ENCODE measurements at regions of chr20 and their contacts with region 1.

Region 1: GRCh38 chr20:2206957-2207769 is 88.6 kb upstream of the TGM3 start:
- DNase-seq: peak; percentile 75
- H3K4me3 Mint-ChIP-seq: peak overlapping the region; percentile 71
- H3K27ac Mint-ChIP-seq: no peak overlapping the region
- H3K4me1 Mint-ChIP-seq: peaks cover 2% of the 10 kb centered on the region
- H3K27me3 Mint-ChIP-seq: peaks cover 6% of the 10 kb centered on the region

Region 2: GRCh38 chr20:1423625-1424106 is 783.5 kb before region 1 on chr20:
- CTCF ChIA-PET with region 1: no interaction called
- intact Hi-C with region 1: no loop called
- DNase-seq: peak; percentile 33
- H3K4me3 Mint-ChIP-seq: no peak overlapping the region
- H3K27ac Mint-ChIP-seq: no peak overlapping the region
- H3K4me1 Mint-ChIP-seq: peaks cover 17% of the 10 kb centered on the region
- H3K27me3 Mint-ChIP-seq: no peaks in the 10 kb centered on the region

Region 3: GRCh38 chr20:2195614-2196013 is 11.5 kb before region 1 on chr20:
- CTCF ChIA-PET with region 1: interaction called, 16 read pairs
- intact Hi-C with region 1: no loop called
- DNase-seq: no peak
- H3K4me3 Mint-ChIP-seq: no peak overlapping the region
- H3K27ac Mint-ChIP-seq: no peak overlapping the region
- H3K4me1 Mint-ChIP-seq: no peaks in the 10 kb centered on the region
- H3K27me3 Mint-ChIP-seq: peaks cover 8% of the 10 kb centered on the region

Region 4: DNA sequence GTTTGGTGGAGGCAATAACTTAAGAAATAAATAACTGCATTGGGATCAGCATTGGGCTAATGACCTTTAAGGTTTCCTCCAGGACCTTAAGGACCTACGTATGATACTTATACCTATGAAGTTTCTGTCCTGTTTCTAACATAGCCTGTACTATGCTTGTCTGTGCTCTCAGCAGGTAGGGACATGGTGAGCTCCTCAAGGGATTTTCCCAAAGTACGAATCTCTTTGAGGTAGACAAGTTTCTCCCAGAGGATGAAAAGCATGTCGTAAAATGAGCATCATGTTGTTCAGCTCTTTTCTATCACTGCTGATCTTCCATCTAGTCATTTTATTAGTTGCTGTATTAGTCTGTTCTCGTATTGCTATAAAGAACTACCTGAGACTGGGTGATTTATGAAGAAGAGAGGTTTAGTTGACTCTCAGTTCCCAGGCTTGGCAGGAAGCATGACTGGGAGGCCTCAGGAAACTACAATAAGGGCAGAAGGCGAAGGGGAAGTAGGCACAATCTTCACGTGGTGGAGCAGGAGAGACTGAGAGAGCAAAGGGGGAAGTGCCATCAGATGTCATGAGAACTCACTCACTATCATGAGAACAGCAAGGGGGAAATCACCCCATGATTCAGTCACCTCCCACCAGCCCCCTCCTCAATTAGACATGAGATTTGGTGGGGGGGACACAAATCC is 10.8 kb after region 1 on chr20:
- CTCF ChIA-PET with region 1: interaction called, 14 read pairs
- intact Hi-C with region 1: loop called (anchors 1 kb)
- DNase-seq: peak; percentile 73
- H3K4me3 Mint-ChIP-seq: no peak overlapping the region
- H3K27ac Mint-ChIP-seq: peak overlapping the region; percentile 42
- H3K4me1 Mint-ChIP-seq: peaks cover 22% of the 10 kb centered on the region
- H3K27me3 Mint-ChIP-seq: no peaks in the 10 kb centered on the region

Region 5: DNA sequence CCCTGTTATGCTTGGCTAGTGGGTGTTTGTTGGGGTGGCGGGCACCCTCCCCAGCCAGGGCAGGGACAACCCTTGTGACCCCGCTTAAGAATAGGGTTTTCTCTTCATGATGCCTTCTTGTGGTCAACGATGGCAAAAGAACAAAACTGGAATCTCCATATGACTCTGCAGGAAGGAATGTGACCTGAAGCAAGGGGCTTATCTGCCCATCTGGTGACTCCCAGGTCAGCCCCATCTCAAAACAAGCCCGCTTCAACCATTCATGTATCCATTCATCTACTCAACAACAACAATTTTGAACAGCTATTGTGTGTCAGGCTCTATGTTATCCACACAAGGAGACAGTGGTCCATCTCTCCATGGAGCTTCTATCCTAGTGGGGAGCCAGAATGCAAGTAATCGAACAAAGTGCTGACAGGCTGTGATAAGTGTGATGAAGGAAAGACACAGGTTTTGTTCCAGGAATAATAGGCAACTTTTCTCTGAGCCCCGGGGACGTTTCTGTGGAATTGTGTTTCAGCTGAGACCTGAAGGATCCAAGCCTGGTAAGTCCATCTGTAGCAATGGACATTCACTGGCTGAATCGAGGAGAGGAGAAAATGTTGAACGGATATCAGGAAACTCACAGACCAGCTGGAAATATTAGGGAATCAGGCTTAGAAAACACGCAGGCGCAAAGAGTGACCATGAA is 142.8 kb after region 1 on chr20:
- CTCF ChIA-PET with region 1: interaction called, 5 read pairs
- intact Hi-C with region 1: loop called (anchors 1 kb)
- DNase-seq: no peak
- H3K4me3 Mint-ChIP-seq: no peak overlapping the region
- H3K27ac Mint-ChIP-seq: no peak overlapping the region
- H3K4me1 Mint-ChIP-seq: no peaks in the 10 kb centered on the region
- H3K27me3 Mint-ChIP-seq: peaks cover 13% of the 10 kb centered on the region

Region 6: DNA sequence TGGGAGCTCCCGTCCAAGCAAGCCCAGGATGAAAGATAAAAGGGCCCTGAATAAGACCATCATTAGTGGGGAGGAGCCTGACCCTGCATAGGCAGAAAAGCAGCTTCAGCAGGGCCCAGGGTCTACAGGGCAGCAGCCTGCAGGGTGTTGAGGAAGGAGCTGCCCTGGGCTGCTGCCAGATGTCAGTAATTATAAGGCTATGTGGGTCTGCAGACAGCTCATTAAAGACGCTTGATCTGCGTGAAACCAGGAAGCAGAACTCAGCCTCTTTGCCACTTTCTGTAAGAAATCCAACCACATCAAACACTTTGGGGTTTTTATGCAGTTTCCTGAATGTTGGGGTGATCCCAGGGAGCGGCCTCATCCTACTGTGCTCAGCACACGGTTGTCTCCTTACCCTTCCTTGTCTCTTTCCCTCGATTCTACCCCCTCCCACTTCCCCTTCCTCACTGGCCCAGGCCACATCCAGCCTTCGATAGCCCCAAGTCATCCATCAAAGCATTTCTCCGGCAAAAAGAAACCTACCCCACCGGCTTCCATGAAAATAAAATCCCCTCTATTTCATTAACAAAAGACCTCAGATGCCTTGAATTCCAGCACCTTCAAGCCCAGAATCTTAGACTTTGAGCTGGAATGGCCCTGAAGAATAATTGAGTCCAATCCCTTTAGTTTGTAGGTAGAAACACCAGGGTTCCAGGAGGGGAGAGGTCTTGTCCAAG is 172.5 kb after region 1 on chr20:
- CTCF ChIA-PET with region 1: no interaction called
- intact Hi-C with region 1: no loop called
- DNase-seq: peak; percentile 54
- H3K4me3 Mint-ChIP-seq: no peak overlapping the region
- H3K27ac Mint-ChIP-seq: no peak overlapping the region
- H3K4me1 Mint-ChIP-seq: peaks cover 17% of the 10 kb centered on the region
- H3K27me3 Mint-ChIP-seq: peaks cover 13% of the 10 kb centered on the region

Region 7: DNA sequence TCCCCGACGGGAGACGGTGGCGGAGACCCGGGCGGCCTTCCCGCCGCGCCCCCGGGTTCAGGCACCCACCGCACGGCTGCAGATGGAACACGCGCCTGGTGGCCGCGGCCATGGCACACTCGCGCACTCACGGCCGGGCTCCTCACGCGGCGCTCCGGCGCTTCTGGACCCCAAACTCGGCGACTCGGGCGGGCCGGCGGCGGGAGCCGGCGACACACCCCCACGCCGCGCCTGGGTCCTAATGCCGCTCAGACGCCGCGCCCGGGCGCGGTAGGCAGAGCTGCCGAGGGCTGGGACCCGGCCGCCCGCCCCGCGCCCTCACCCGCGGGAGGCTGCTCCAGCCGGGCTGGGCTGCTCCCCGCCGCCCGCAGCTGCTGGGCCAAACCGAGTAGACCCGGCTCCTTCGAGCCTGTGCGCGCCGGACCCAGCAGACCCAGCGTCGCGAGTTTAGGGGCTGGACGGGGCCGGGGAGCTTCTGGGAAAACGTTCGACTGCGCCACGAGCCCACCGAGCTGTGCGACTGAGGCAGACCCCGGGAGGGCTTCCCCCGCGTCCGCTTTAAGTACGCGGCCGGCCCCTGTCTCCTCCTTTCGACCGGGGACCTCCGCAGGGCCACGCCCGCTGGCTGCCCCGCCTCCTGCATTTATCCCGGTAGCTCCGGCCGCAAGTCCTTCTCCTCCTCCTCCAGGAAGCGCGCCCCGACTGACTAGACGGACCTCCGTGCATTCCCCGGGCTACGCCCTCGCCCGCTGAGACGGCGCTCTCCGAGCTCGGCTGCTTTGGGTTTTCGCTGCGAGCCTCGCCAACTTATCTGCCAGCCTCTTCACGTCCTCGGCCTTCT is 1032.1 kb after region 1 on chr20 and contains the start of gene SLC4A11:
- CTCF ChIA-PET with region 1: no interaction called
- intact Hi-C with region 1: no loop called
- DNase-seq: peak; percentile 33
- H3K4me3 Mint-ChIP-seq: peak within 1 kb of the TSS; percentile 77
- H3K27ac Mint-ChIP-seq: no peak within 1 kb of the TSS
- H3K4me1 Mint-ChIP-seq: peaks cover 6% of the 10 kb centered on the region
- H3K27me3 Mint-ChIP-seq: peaks cover 66% of the 10 kb centered on the region
- total RNA-seq, gene SLC4A11: 0.72 to 0.91 TPM

Measured in activated naive CD4-positive, alpha-beta T cell treated with anti-CD3 and anti-CD28 coated beads for 36 hours (primary cell).